Common myeloid progenitor, CD34-positive (primary cell): ENCODE measurements at regions of chr6 and their contacts with region 1.

Region 1: GRCh38 chr6:81752138-81752920 is at the start of gene TENT5A:
- DNase-seq: peak; percentile 91 to 97 (median 96)
- H3K4me3 ChIP-seq: peak within 1 kb of the TSS; percentile 84 to 99 (median 95)
- H3K27ac ChIP-seq: peak within 1 kb of the TSS; percentile 70 to 80
- H3K4me1 ChIP-seq: peaks cover 21 to 46% (median 35%) of the 10 kb centered on the region in 4 experiments
- H3K27me3 ChIP-seq: no peaks in the 10 kb centered on the region

Region 2: DNA sequence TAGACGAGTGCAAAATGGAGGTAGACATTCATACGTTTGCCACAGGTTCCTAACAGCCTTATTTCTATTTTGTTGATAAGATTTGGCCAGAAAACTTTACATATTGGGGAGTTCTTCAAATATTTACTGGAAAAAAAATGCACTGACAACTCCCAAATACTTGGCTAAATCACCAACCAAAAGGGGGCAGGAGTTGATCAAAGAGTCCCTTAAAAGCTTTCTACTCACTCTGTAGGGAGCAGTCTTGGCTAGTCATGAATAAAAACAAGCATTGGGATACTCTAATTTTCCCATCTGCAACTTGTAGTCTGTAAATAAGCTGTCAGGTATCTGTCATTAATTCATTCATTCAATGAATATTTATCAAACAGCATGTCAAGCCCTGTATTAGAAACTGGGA is 18.2 kb before region 1 on chr6:
- CTCF ChIA-PET with region 1: interaction called, 13 read pairs
- POLR2A ChIA-PET with region 1: no interaction called
- DNase-seq: peak in 2 of 3 donors; percentile 34 to 47
- H3K4me3 ChIP-seq: no peak overlapping the region
- H3K27ac ChIP-seq: no peak overlapping the region
- H3K4me1 ChIP-seq: peaks cover 0 to 3% (median 0%) of the 10 kb centered on the region in 4 experiments
- H3K27me3 ChIP-seq: no peaks in the 10 kb centered on the region

Region 3: DNA sequence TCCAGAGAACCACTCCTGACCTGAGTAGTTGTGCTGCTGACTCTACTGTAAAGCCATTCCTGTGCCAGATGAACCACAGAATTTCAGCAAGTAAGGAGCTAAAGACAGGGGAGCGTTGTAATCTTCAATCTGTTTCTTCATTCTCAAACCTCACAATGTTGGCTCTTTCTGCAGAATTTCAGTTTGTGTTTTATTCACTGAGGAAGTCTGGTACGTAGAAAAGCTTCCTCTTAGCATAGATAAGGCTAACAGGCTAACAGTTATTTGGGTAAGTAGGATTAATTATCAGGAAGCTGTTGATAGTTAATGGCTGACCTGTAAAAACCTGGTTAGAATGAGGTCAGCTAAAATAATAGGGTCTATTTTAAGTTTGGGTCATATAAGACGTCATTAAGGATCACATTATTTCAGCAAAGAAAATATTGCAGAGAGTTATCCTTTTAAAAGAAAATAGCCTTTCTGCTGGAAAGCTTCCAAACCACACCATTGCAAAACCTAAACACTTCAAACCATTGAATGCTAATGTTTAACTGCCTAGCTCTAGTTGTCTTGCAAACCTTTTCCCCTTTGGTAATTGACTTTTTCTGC is 14.2 kb after region 1 on chr6:
- CTCF ChIA-PET with region 1: interaction called, 24 read pairs
- POLR2A ChIA-PET with region 1: interaction called, 11 read pairs
- DNase-seq: peak; percentile 80 to 95 (median 93)
- H3K4me3 ChIP-seq: peak overlapping the region in 5 of 7 experiments; percentile 8 to 57 (median 36)
- H3K27ac ChIP-seq: peak overlapping the region in 1 of 2 experiments; percentile 63
- H3K4me1 ChIP-seq: peaks cover 28 to 64% (median 49%) of the 10 kb centered on the region in 4 experiments
- H3K27me3 ChIP-seq: no peaks in the 10 kb centered on the region